Vagina (tissue), 2 donors: ENCODE measurements at regions of chr12 and their contacts with region 1.

Region 1: GRCh38 chr12:122467986-122468385 is 32.7 kb downstream of the ZCCHC8 start:
- DNase-seq: no peak
- H3K4me3 ChIP-seq: no peak overlapping the region
- H3K27ac ChIP-seq: no peak overlapping the region
- H3K4me1 ChIP-seq: peaks cover 15% of the 10 kb centered on the region
- H3K27me3 ChIP-seq: no peaks in the 10 kb centered on the region
- CTCF ChIP-seq: no peak
- POLR2A ChIP-seq: no peak

Region 2: DNA sequence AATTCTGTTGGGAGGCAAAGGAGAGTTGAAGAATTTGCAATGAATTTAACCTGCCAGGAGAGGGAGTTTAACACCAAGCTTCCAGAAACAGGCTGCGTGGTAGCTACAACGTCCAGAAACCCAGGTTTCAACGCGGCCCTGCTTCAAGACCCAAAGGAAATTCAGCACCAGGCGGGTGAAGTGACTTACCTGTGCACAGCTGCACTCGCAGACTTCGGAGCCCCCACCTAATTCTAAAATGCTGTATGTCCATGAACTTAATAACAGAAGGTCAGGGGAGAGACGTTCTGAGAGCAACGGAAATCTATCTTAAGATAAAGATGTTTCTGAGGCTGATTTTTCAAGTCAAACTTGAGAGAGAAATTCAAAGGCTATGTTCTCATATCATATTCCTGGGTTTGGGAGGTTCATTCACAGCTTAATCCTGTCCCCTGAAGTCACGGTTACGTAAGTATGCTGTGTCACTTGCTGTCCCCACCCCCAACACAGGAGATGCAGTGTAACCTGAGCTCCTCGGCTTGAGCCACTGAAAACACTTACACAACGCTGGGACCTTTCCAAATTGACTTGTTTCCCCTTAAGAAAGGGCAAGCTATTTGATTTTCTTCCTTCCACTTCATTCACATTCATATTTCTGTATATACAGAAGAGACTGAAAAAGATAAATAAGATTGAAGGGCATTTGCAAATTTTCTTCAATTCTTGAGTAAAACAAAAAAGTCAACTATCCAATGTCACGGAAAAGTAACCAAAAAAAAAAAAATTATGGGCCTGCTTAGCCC is 68.2 kb before region 1 on chr12:
- intact Hi-C with region 1: loop called (anchors 5 kb)
- DNase-seq: peak in 1 of 2 donors; percentile 91
- H3K4me3 ChIP-seq: no peak overlapping the region
- H3K27ac ChIP-seq: peak overlapping the region; percentile 97
- H3K4me1 ChIP-seq: peaks cover 35% of the 10 kb centered on the region
- H3K27me3 ChIP-seq: no peaks in the 10 kb centered on the region
- CTCF ChIP-seq: peak; percentile 54 to 61 (median 59)
- POLR2A ChIP-seq: no peak